GM12878 (cell line): ENCODE measurements at regions of chr5 and their contacts with region 1.

Region 1: DNA sequence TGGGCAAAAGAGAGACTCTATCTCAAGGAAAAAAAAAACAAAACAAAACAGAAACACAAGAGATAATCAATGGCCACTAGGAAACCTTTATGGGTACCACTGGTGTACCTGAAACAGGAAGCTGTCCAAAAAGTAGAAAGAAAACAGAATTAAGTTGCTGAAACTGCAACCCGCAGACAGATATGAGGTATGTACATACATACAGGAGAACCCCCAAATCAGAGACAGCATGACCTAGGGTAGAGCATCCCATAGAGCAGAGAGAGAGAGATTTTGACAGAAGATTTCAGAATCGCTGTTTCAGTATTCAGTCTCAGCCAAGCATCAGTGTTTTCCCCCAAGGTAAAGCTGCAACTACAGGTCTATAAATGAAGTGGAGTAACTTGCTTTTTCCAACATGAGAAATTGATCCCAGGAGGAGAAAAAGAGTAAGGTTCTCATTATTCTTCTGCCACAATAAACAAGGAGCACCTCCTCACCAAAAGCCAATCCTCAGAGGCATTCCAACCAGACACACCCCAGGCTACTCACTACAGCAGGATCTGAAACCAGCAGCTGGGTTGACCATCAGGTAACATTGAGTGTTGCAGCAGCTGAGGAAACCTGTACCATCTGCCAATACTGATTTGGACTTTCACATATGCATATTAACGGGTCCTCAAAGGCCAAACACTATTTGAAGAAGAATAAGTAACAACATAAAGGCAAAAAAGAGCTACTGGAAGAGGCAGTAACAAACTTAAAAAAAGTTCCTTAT is 630.0 kb downstream of the TAF11L14 start:
- DNase-seq: no peak
- ATAC-seq: no peak
- H3K4me3 ChIP-seq: no peak overlapping the region
- H3K27ac ChIP-seq: no peak overlapping the region
- H3K4me1 ChIP-seq: no peaks in the 10 kb centered on the region
- H3K27me3 ChIP-seq: no peaks in the 10 kb centered on the region
- CTCF ChIP-seq: no peak
- EP300 ChIP-seq: no peak
- POLR2A ChIP-seq: no peak
- RAD21 ChIP-seq: no peak

Region 2: GRCh38 chr5:18202149-18202548 is 62.2 kb before region 1 on chr5:
- CTCF ChIA-PET with region 1: no interaction called
- POLR2A ChIA-PET with region 1: no interaction called
- RAD21 ChIA-PET with region 1: no interaction called
- SMC1A ChIA-PET with region 1: no interaction called
- in situ Hi-C with region 1: no loop called
- intact Hi-C with region 1: loop called (anchors 10 kb)
- DNase-seq: no peak
- ATAC-seq: no peak
- H3K4me3 ChIP-seq: no peak overlapping the region
- H3K27ac ChIP-seq: no peak overlapping the region
- H3K4me1 ChIP-seq: no peaks in the 10 kb centered on the region
- H3K27me3 ChIP-seq: no peaks in the 10 kb centered on the region
- CTCF ChIP-seq: no peak
- EP300 ChIP-seq: no peak
- POLR2A ChIP-seq: no peak
- RAD21 ChIP-seq: no peak